T-cell (primary cell): ENCODE measurements at regions of chr3 and their contacts with region 1.

Region 1: DNA sequence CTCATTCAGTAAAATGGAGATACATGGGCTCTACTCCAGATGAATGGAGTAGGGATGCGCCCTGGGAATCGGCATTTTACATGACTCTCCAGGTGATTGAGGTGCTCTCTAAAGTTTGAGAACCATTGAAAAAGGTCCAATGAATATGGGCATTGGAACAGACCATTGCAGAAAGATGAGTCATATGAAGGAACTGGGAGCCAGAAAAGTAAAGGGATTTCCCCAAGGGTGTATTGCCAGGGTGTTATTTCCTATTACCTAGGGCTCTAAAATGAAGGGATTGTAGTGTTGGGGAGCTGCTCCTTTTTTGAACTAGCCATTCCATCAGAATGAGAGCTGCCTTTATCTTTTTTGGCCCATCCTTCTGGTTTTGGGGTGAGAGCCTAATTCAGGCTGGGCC is 21.7 kb downstream of the CLDN11 start:
- DNase-seq: no peak
- ATAC-seq: no peak
- H3K4me3 ChIP-seq: no peak overlapping the region
- H3K4me3 Mint-ChIP-seq: no peak overlapping the region
- H3K27ac ChIP-seq: no peak overlapping the region
- H3K27ac Mint-ChIP-seq: no peak overlapping the region
- H3K4me1 ChIP-seq: no peaks in the 10 kb centered on the region
- H3K4me1 Mint-ChIP-seq: no peaks in the 10 kb centered on the region
- H3K27me3 ChIP-seq: peaks cover 0 to 15% of the 10 kb centered on the region in 2 experiments
- H3K27me3 Mint-ChIP-seq: peaks cover 12 to 29% of the 10 kb centered on the region in 2 donors

Region 2: GRCh38 chr3:170420307-170420821 is 20.0 kb before region 1 on chr3:
- CTCF ChIA-PET with region 1: no interaction called
- POLR2A ChIA-PET with region 1: interaction called in 1 of 2 experiments, 14 read pairs
- DNase-seq: no peak
- ATAC-seq: no peak
- H3K4me3 ChIP-seq: no peak overlapping the region
- H3K4me3 Mint-ChIP-seq: peak overlapping the region in 2 of 3 donors; percentile 52 to 68
- H3K27ac ChIP-seq: no peak overlapping the region
- H3K27ac Mint-ChIP-seq: no peak overlapping the region
- H3K4me1 ChIP-seq: peaks cover 0 to 19% of the 10 kb centered on the region in 2 experiments
- H3K4me1 Mint-ChIP-seq: peaks cover 13 to 21% (median 19%) of the 10 kb centered on the region in 3 donors
- H3K27me3 ChIP-seq: peaks cover 12 to 40% of the 10 kb centered on the region in 2 experiments
- H3K27me3 Mint-ChIP-seq: peaks cover 36 to 43% of the 10 kb centered on the region in 2 donors